ENCODE measurements at regions of chr5 and their contacts with region 1.

Region 1: GRCh38 chr5:132820162-132820754 is 7.2 kb downstream of the SOWAHA start:
- DNase-seq: peak; percentile 74 to 93 (median 87)
- ATAC-seq: peak; percentile 85
- H3K4me3 ChIP-seq: peak overlapping the region in 1 of 2 experiments; percentile 35
- H3K4me3 Mint-ChIP-seq: peak overlapping the region; percentile 40
- H3K27ac ChIP-seq: no peak overlapping the region
- H3K27ac Mint-ChIP-seq: no peak overlapping the region
- H3K4me1 ChIP-seq: peaks cover 16% of the 10 kb centered on the region
- H3K4me1 Mint-ChIP-seq: peaks cover 11% of the 10 kb centered on the region
- H3K27me3 ChIP-seq: peaks cover 10 to 14% of the 10 kb centered on the region in 2 experiments
- H3K27me3 Mint-ChIP-seq: peaks cover 36% of the 10 kb centered on the region
- CTCF ChIP-seq: peak; percentile 89

Region 2: GRCh38 chr5:131379723-131380122 is 1440.5 kb before region 1 on chr5:
- CTCF ChIA-PET with region 1: no interaction called
- POLR2A ChIA-PET with region 1: no interaction called
- intact Hi-C with region 1: no loop called
- DNase-seq: peak; percentile 37 to 96 (median 71)
- ATAC-seq: peak; percentile 66
- H3K4me3 ChIP-seq: peak overlapping the region in 1 of 2 experiments; percentile 1
- H3K4me3 Mint-ChIP-seq: peak overlapping the region; percentile 58
- H3K27ac ChIP-seq: peak overlapping the region; percentile 94 to 99
- H3K27ac Mint-ChIP-seq: peak overlapping the region; percentile 97
- H3K4me1 ChIP-seq: peaks cover 89% of the 10 kb centered on the region
- H3K4me1 Mint-ChIP-seq: peaks cover 90% of the 10 kb centered on the region
- H3K27me3 ChIP-seq: no peaks in the 10 kb centered on the region
- H3K27me3 Mint-ChIP-seq: no peaks in the 10 kb centered on the region
- CTCF ChIP-seq: no peak

Region 3: DNA sequence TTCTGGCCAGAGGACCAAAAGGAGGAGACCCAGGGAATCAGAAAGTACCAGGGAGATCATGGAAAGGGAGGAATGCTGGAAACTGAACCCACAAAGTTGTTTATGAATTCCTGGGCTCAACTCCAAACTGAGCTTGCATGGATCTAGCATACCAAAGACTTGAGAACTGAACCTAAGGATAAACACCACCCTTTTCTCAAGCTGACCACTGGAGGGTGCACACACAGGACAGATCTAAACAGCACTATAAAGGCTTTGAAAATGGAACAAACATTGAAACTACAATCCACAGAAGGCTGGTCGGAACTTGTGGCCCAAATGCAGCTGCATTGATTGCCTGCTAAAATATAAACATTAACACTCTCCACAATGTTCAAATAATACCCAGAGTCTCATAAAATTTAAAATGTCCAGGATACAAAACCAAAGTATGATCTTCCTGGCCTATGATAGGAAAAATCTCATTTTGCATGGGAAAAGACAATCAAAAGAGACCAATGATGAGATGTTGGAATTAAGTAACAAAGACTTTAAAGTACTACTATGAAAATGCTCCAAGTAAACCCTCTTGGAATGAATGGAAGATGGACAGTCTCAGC is 314.1 kb before region 1 on chr5:
- CTCF ChIA-PET with region 1: interaction called, 4 read pairs
- POLR2A ChIA-PET with region 1: no interaction called
- intact Hi-C with region 1: loop called in 1 of 2 experiments (anchors 5 kb)
- DNase-seq: peak in 1 of 9 experiments; percentile 22
- ATAC-seq: peak; percentile 43
- H3K4me3 ChIP-seq: no peak overlapping the region
- H3K4me3 Mint-ChIP-seq: no peak overlapping the region
- H3K27ac ChIP-seq: no peak overlapping the region
- H3K27ac Mint-ChIP-seq: no peak overlapping the region
- H3K4me1 ChIP-seq: peaks cover 5% of the 10 kb centered on the region
- H3K4me1 Mint-ChIP-seq: peaks cover 2% of the 10 kb centered on the region
- H3K27me3 ChIP-seq: no peaks in the 10 kb centered on the region
- H3K27me3 Mint-ChIP-seq: peaks cover 21% of the 10 kb centered on the region
- CTCF ChIP-seq: no peak

Region 4: DNA sequence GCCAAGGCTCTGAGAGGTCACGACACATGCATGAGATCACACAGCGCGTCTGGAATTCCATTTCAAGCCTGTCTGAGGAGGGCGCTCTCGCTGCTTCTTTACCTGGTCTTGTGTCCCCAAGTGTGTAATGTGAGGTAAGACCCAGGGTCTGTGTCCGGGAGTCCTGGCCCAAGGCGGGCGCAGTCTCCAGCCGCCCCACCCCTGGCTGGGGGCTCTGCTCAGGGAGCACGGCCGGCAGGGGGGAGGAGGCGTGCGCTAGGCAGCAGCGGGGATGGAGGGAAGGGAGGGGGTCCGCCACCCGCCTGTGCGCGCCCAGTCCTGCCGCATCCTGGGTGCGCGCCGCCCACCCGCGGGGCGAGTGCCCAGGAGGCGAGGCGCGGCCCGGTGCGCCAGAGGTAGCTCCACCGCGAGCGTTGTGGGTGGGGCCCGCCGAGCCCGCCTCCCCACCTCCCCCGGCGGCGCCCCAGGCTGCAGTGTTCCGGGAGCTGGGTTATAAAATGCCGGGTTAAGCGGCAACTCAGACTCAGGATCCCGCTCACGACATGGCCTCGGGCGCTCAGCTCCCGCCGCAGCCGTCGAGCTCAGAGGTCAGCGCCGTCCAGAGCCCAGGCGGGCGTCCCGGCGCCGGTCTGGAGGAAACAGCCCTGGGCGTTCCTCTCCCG is 73.2 kb before region 1 on chr5 and contains the start of gene CCNI2:
- CTCF ChIA-PET with region 1: interaction called, 6 read pairs
- POLR2A ChIA-PET with region 1: interaction called, 4 read pairs
- intact Hi-C with region 1: loop called (anchors 1 to 2 kb)
- DNase-seq: peak; percentile 34 to 82 (median 65)
- ATAC-seq: peak; percentile 85
- H3K4me3 ChIP-seq: peak within 1 kb of the TSS; percentile 57 to 59
- H3K4me3 Mint-ChIP-seq: peak within 1 kb of the TSS; percentile 84
- H3K27ac ChIP-seq: peak within 1 kb of the TSS; percentile 29 to 36
- H3K27ac Mint-ChIP-seq: peak within 1 kb of the TSS; percentile 67
- H3K4me1 ChIP-seq: peaks cover 8% of the 10 kb centered on the region
- H3K4me1 Mint-ChIP-seq: peaks cover 11% of the 10 kb centered on the region
- H3K27me3 ChIP-seq: peaks cover 0 to 3% of the 10 kb centered on the region in 2 experiments
- H3K27me3 Mint-ChIP-seq: no peaks in the 10 kb centered on the region
- CTCF ChIP-seq: peak; percentile 45
- total RNA-seq, gene CCNI2: 4.4 to 6.3 TPM

Region 5: DNA sequence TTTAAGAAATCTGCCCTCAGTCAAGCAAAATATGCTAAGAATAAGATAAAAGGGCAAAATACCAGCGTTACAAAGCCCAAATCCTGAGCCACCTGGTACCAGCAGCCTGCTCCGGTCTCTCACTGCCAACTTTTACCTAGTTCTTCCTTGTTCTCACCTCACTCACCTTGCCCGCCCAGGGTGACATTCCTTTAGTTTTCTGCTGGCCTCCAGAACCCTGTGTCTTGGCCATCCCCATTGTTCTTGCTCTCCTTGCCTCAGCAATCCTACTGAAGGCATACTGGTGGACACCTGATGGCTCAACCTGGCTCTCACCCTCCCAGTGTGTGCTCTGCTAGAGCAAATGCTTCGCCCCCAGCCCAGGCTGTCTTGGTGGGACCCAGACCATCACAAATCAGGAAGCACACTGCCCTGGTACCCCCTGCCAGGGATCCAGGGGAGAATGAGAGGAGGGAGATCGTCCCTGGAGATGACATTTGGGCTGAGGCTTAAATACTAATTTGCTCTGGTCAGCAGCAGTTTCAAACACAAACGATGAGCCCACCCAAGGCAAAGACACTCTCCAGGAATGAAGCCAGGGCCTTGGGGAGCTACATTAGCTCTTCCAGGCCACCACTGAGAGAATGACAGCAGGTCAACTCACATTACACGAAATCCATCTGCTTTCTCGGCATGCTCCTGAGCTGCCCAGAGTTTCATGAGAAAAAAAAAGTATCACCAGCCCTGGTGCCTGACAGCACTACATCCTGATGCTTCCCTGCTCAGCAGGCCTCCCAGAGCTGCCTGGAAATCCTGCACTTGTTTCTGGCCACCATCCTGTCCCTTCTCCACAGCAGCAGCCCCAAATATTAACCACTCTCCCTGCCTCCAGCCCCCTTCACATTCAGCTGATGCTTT is 31.0 kb before region 1 on chr5:
- CTCF ChIA-PET with region 1: interaction called, 9 read pairs
- POLR2A ChIA-PET with region 1: no interaction called
- intact Hi-C with region 1: loop called in 1 of 2 experiments (anchors 2 kb)
- DNase-seq: no peak
- ATAC-seq: no peak
- H3K4me3 ChIP-seq: no peak overlapping the region
- H3K4me3 Mint-ChIP-seq: no peak overlapping the region
- H3K27ac ChIP-seq: no peak overlapping the region
- H3K27ac Mint-ChIP-seq: no peak overlapping the region
- H3K4me1 ChIP-seq: no peaks in the 10 kb centered on the region
- H3K4me1 Mint-ChIP-seq: no peaks in the 10 kb centered on the region
- H3K27me3 ChIP-seq: peaks cover 0 to 4% of the 10 kb centered on the region in 2 experiments
- H3K27me3 Mint-ChIP-seq: peaks cover 30% of the 10 kb centered on the region
- CTCF ChIP-seq: no peak

Region 6: DNA sequence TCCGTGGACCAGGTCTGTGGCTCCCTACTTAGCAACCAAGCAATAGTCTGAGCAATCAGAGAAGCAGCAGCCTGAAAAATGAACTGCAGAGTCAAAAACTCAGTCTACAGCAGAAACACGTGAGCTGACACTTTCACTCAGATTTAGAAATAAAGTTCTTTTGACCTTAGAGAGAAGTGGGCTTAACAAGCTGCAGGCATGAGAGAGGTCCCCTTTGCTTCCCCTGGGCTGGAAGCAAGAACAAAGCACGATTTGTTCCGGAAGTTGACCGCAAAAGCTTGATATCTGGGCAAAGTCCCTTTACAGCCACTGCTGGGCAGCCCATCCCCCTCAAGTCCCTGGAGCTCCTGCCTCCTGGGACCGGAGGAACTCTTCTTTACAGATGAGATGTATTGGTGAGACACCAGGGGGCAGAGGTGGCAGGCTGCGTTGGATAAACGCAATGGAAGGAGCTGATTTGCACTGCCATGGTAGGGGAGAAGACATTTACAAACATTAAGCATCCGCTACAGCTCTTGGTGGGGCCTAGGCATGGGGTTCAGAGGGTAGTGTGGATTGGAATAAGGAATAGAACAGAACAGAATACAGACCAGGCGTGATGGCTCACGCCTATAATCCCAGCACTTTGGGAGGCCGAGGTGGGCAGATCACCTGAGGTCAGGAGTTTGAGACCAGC is 13.0 kb before region 1 on chr5:
- CTCF ChIA-PET with region 1: interaction called, 55 read pairs
- POLR2A ChIA-PET with region 1: no interaction called
- intact Hi-C with region 1: no loop called
- DNase-seq: no peak
- ATAC-seq: no peak
- H3K4me3 ChIP-seq: no peak overlapping the region
- H3K4me3 Mint-ChIP-seq: no peak overlapping the region
- H3K27ac ChIP-seq: no peak overlapping the region
- H3K27ac Mint-ChIP-seq: no peak overlapping the region
- H3K4me1 ChIP-seq: no peaks in the 10 kb centered on the region
- H3K4me1 Mint-ChIP-seq: peaks cover 1% of the 10 kb centered on the region
- H3K27me3 ChIP-seq: peaks cover 7 to 8% of the 10 kb centered on the region in 2 experiments
- H3K27me3 Mint-ChIP-seq: peaks cover 64% of the 10 kb centered on the region
- CTCF ChIP-seq: no peak

Region 7: DNA sequence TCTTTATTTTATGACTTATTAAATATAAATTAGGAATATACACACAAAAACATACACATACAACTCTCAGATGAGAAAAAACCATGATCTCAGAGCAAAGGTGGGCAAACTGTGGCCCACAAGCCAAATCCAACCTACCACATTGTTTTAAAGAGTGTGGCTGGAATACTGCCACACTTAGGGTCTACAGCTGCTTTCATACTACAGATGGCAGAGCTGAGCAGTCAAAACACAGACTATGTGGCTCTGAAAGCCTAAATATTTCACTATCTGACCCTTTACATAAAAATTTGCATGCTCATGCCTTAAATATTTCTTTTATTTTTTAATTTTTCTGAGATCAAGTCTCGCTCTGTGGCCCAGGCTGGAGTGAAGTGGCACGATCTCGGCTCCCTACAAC is 81.5 kb after region 1 on chr5:
- CTCF ChIA-PET with region 1: no interaction called
- POLR2A ChIA-PET with region 1: no interaction called
- intact Hi-C with region 1: no loop called
- DNase-seq: no peak
- ATAC-seq: no peak
- H3K4me3 ChIP-seq: no peak overlapping the region
- H3K4me3 Mint-ChIP-seq: no peak overlapping the region
- H3K27ac ChIP-seq: no peak overlapping the region
- H3K27ac Mint-ChIP-seq: no peak overlapping the region
- H3K4me1 ChIP-seq: no peaks in the 10 kb centered on the region
- H3K4me1 Mint-ChIP-seq: peaks cover 12% of the 10 kb centered on the region
- H3K27me3 ChIP-seq: no peaks in the 10 kb centered on the region
- H3K27me3 Mint-ChIP-seq: no peaks in the 10 kb centered on the region
- CTCF ChIP-seq: no peak

Measured in CD8-positive, alpha-beta T cell (primary cell).